Activated CD4-positive, alpha-beta T cell treated with anti-CD3 and anti-CD28 coated beads, Interleukin-2, amount 10 ng/mL, durations not matched to agents 24 days and 14 days (primary cell): ENCODE measurements at regions of chr2 and their contacts with region 1.

Region 1: GRCh38 chr2:222797261-222797660 is 63.6 kb upstream of the ACSL3 start:
- DNase-seq: no peak
- H3K4me3 Mint-ChIP-seq: no peak overlapping the region
- H3K27ac Mint-ChIP-seq: no peak overlapping the region
- H3K4me1 Mint-ChIP-seq: no peaks in the 10 kb centered on the region
- H3K27me3 Mint-ChIP-seq: peaks cover 4% of the 10 kb centered on the region

Region 2: GRCh38 chr2:222538535-222538934 is 258.7 kb before region 1 on chr2:
- intact Hi-C with region 1: no loop called
- DNase-seq: no peak
- H3K4me3 Mint-ChIP-seq: no peak overlapping the region
- H3K27ac Mint-ChIP-seq: no peak overlapping the region
- H3K4me1 Mint-ChIP-seq: no peaks in the 10 kb centered on the region
- H3K27me3 Mint-ChIP-seq: no peaks in the 10 kb centered on the region

Region 3: GRCh38 chr2:222903234-222904220 is 106.3 kb after region 1 on chr2:
- intact Hi-C with region 1: loop called (anchors 5 kb)
- DNase-seq: peak; percentile 76
- H3K4me3 Mint-ChIP-seq: no peak overlapping the region
- H3K27ac Mint-ChIP-seq: no peak overlapping the region
- H3K4me1 Mint-ChIP-seq: peaks cover 12% of the 10 kb centered on the region
- H3K27me3 Mint-ChIP-seq: no peaks in the 10 kb centered on the region